ENCODE measurements at regions of chr12 and their contacts with region 1.

Region 1: DNA sequence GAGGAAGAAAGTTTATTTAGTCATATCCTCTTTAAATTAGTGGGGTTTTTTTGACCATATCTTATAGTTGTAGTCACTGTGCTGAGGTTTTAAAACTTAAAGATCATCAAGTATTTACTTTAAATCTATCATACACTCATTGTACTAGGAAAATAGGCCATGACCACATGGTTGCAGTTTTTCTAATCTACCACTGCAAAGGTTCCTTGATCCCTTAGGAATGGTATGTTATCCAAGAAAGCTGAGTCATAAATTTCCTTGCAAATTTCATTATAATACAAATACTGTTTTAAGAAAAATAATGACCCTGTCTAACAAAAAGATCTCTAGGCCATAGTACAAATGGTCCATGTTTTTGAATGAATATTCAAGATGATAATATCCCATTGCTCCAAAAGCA is 74.7 kb downstream of the DBX2 start:
- ATAC-seq: no peak
- H3K4me3 ChIP-seq: no peak overlapping the region
- H3K27ac ChIP-seq: no peak overlapping the region
- H3K4me1 ChIP-seq: no peaks in the 10 kb centered on the region

Region 2: DNA sequence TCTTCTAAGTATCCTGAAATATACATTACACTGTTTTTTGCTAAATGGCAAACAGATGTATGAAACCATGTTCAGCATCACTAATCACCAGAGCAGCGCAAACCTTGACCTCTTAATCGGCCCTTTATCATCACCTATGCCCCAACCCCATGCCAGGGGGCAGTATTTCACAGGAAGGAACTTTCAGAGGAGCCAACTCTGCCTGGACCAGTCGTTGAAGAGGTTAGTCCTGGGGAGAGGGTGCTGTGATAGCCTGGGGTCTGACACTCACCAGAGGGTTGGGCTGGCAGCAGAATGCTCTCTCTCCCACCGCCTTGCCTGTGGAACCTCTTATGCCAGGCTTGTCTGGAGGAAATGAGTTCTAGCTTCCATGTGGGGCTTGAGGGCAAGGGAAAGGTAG is 728.7 kb before region 1 on chr12:
- in situ Hi-C with region 1: no loop called
- ATAC-seq: no peak
- H3K4me3 ChIP-seq: no peak overlapping the region
- H3K27ac ChIP-seq: no peak overlapping the region
- H3K4me1 ChIP-seq: no peaks in the 10 kb centered on the region

Region 3: DNA sequence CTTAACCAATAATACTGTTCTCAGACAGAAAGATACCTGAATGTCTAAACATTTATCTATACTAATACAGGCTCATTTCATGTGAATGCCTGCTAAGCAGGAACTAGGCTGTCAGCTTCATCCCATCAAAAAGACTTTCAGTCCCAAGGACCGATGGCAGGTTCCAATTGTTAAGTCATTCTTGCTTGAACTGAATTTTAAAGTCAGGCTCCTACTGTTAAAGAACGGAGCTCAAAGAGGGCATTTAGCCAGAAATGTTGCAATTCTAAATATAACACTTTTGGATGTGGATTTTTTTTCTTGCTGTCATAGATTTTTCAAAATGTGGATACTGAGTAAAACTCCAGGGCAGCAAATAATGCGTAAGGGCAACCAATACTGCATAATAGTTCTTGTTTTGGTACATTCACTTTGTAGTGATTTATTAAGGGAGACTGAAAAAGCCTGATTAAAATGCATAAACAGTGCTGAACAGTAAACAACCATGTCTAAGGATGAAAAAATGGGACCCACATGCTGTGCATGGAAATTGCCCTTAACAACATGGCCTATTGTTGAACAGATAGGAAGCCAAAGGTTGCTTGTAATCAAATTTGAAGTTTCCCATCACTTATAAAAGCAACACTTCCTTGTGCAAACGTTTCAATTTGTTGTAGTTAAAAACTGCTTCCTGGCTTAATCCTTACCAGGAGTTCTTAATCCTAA is 113.3 kb after region 1 on chr12:
- in situ Hi-C with region 1: loop called in 1 of 9 experiments (anchors 25 kb)
- ATAC-seq: peak in 5 of 8 experiments; percentile 43 to 95 (median 83)
- H3K4me3 ChIP-seq: no peak overlapping the region
- H3K27ac ChIP-seq: no peak overlapping the region
- H3K4me1 ChIP-seq: peaks cover 14% of the 10 kb centered on the region in 2 donors

Region 4: DNA sequence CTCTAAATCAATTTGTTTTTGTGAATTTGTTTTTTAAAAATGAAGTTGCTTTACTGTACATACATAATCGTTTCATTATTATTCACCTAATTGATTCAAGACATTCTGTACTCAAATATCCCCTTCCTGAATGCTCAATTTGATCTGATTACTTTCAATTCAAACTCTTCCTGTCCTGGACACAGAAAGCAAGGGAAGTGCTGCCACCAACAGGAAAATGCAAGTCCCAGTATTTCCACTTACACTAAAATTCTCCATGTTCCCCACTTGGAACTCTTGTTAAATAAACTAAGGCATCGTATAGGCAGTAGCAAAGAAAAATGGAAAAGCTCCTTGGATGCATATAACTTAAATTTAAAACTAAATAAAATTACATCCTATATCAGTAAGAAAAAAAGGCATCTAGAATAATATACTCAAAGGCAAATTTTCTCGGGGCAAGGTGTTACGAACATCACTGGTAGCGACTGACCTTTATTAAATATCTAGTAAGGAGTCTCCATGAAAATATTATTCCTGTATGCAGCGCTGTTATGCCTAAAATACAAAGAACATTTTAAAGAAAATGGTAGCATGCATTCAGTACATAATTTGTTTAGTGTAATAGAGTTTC is 146.6 kb after region 1 on chr12:
- in situ Hi-C with region 1: loop called in 1 of 9 experiments (anchors 25 kb)
- ATAC-seq: peak in 3 of 8 experiments; percentile 57 to 65 (median 63)
- H3K4me3 ChIP-seq: no peak overlapping the region
- H3K27ac ChIP-seq: no peak overlapping the region
- H3K4me1 ChIP-seq: peaks cover 0 to 2% of the 10 kb centered on the region in 2 donors

Measured in motor neuron (in vitro differentiated cells).